ENCODE measurements at regions of chr3 and their contacts with region 1.

Region 1: DNA sequence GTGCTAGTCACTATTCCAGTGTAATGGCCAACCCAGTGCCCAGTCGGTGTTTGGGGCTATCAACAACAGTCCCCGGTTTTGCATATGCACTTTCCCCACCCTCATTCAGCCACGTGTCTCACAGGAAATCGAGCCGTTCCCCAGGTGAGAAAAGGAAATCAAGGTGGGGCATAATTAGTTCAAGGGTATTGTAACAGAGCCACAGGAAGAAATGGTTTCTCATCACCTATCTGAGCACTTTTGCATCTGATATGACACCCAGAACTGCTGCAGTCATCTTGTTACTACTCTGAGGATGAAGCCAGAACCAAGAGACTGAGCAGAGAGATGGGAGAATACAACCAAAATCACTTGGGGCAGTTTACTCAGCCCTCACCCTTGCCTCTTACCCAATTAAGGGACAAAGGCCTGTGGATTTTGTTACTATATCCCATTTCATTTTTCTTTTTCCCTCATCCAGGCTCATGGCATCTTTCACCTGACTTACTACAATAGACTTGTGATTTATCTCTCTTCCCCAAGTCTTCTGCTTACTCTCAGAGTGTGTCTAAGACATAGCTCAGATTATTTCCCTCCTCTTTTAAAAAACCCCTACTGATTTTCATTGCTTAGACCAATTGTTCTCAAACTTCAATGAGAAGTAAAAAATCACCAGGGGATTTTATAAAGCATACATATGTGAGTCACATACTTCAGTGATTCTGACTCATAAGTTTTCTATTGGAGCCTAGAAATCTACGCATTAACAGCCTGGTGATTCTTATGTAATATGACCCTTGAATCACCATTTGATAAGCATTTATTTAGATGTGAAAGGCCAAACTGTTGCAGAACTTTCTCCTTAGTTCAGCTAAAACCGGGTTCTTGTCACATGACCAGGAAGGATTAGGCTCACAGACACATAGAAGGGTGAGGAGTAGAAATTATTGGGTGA is 40.5 kb downstream of the TRAT1 start:
- DNase-seq: peak; percentile 79
- H3K4me3 Mint-ChIP-seq: peak overlapping the region; percentile 63
- H3K27ac Mint-ChIP-seq: peak overlapping the region; percentile 100
- H3K4me1 Mint-ChIP-seq: peaks cover 51% of the 10 kb centered on the region
- H3K27me3 Mint-ChIP-seq: no peaks in the 10 kb centered on the region

Region 2: DNA sequence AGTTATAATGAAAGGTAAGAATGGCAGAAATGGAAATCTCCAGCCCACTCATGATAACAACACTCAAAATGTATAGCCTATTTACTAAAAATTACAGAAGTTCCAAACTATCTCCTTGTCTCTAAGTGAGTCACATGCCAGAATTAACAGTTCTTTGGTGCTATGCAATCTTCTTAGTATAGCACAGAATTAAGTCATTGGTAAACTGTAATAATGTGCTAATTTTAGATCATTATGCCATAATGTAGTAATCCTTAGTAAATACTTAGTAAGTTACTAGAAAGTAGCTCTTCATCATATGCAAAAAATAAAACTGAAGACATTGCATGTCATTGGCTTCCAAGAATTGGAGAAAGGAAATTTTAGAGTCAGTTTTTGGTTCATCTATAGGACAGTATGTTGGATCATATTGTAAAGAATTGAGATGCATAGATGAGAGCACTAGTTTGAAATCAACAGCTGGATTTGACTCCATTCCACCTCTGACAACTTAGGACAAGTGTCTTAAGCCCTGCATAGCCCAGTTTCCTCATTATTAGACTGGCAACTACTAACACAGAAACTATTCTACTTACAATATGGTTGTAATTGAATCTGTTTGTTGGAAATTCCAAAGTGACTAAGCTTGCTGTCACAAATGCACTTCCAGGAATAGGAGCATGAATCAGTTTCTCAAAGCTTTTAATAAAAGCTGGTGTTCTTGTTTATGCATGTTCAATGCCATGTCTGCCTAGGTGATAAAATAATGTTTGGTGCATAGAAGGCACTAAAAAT is 732.2 kb before region 1 on chr3:
- CTCF ChIA-PET with region 1: no interaction called
- intact Hi-C with region 1: loop called (anchors 2 kb)
- DNase-seq: no peak
- H3K4me3 Mint-ChIP-seq: peak overlapping the region; percentile 16
- H3K27ac Mint-ChIP-seq: peak overlapping the region; percentile 76
- H3K4me1 Mint-ChIP-seq: peaks cover 85% of the 10 kb centered on the region
- H3K27me3 Mint-ChIP-seq: no peaks in the 10 kb centered on the region

Region 3: GRCh38 chr3:108835101-108835500 is 28.0 kb before region 1 on chr3:
- CTCF ChIA-PET with region 1: interaction called, 8 read pairs
- intact Hi-C with region 1: loop called (anchors 1 kb)
- DNase-seq: peak; percentile 66
- H3K4me3 Mint-ChIP-seq: peak overlapping the region; percentile 81
- H3K27ac Mint-ChIP-seq: peak overlapping the region; percentile 93
- H3K4me1 Mint-ChIP-seq: peaks cover 77% of the 10 kb centered on the region
- H3K27me3 Mint-ChIP-seq: no peaks in the 10 kb centered on the region

Region 4: DNA sequence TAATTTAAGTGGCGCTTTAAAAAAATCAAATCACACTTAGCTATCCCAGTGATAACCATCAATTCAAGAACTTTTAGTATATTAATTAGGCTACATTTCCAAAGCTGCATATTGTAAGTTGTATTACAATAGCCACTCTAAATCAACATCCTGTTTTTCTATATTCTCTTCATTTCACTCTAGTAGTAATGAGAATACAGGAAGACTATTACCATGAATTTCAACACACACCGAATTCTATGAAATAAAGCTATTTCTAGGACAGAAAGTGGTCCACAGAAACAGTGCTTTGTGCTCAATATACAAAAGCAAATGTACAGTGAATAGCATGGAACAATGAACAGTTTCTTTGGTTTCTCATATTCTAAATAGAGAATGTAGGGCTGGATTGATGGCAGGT is 15.9 kb before region 1 on chr3:
- CTCF ChIA-PET with region 1: interaction called, 3 read pairs
- intact Hi-C with region 1: loop called (anchors 1 kb)
- DNase-seq: no peak
- H3K4me3 Mint-ChIP-seq: no peak overlapping the region
- H3K27ac Mint-ChIP-seq: no peak overlapping the region
- H3K4me1 Mint-ChIP-seq: peaks cover 74% of the 10 kb centered on the region
- H3K27me3 Mint-ChIP-seq: no peaks in the 10 kb centered on the region

Region 5: DNA sequence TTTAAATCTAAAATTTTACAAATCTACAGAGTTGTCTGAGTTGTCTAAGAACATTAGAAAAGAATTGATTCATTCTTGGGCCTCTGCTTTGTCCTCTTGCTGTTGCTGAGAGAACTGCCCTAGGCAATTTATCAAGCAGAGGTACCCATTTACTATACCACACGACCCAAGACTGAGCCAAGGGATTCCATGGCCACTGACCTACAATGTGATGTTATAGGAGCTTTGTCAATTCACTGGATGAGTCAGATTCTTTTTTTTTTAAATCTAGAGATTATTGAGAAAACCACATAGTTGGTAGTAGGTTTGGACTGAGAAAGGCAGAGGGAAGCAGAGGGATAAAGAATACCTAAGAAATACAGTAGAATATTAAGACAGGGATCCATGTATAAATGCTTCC is 14.8 kb after region 1 on chr3:
- CTCF ChIA-PET with region 1: interaction called, 4 read pairs
- intact Hi-C with region 1: loop called (anchors 1 kb)
- DNase-seq: no peak
- H3K4me3 Mint-ChIP-seq: no peak overlapping the region
- H3K27ac Mint-ChIP-seq: no peak overlapping the region
- H3K4me1 Mint-ChIP-seq: peaks cover 13% of the 10 kb centered on the region
- H3K27me3 Mint-ChIP-seq: no peaks in the 10 kb centered on the region

Region 6: DNA sequence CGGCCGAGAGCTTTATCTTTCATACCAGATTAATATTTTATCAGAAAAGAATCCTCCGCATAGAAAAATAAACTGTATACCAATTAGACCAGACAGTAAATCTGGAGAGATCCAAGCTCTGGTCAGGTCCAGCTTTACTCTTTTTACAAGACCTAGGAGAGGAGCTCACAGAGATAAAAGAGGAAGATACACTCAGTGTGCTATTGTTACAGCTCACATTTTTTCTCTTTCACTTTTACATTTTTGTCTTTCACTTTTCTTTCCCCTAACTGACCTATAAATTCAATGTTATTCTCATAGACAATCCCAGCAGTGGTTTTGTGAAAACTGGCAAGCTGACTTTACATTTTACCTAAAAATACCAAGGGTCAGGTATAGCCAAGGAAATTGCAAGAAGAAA is 34.8 kb after region 1 on chr3:
- CTCF ChIA-PET with region 1: interaction called, 6 read pairs
- intact Hi-C with region 1: loop called (anchors 1 kb)
- DNase-seq: no peak
- H3K4me3 Mint-ChIP-seq: no peak overlapping the region
- H3K27ac Mint-ChIP-seq: peak overlapping the region; percentile 36
- H3K4me1 Mint-ChIP-seq: peaks cover 23% of the 10 kb centered on the region
- H3K27me3 Mint-ChIP-seq: no peaks in the 10 kb centered on the region

Region 7: GRCh38 chr3:108970561-108970960 is 107.4 kb after region 1 on chr3:
- CTCF ChIA-PET with region 1: no interaction called
- intact Hi-C with region 1: no loop called
- DNase-seq: no peak
- H3K4me3 Mint-ChIP-seq: no peak overlapping the region
- H3K27ac Mint-ChIP-seq: no peak overlapping the region
- H3K4me1 Mint-ChIP-seq: peaks cover 3% of the 10 kb centered on the region
- H3K27me3 Mint-ChIP-seq: peaks cover 2% of the 10 kb centered on the region